ENCODE measurements at regions of chr15 and their contacts with region 1.

Region 1: GRCh38 chr15:70111203-70112073 is 13.7 kb upstream of the TLE3 start:
- DNase-seq: peak; percentile 76
- H3K4me3 ChIP-seq: peak overlapping the region in 1 of 4 donors; percentile 21
- H3K27ac ChIP-seq: peak overlapping the region; percentile 78 to 82 (median 80)
- H3K4me1 ChIP-seq: peaks cover 5 to 14% (median 7%) of the 10 kb centered on the region in 4 donors
- H3K27me3 ChIP-seq: no peaks in the 10 kb centered on the region
- CTCF ChIP-seq: no peak
- EP300 ChIP-seq: no peak
- POLR2A ChIP-seq: no peak

Region 2: DNA sequence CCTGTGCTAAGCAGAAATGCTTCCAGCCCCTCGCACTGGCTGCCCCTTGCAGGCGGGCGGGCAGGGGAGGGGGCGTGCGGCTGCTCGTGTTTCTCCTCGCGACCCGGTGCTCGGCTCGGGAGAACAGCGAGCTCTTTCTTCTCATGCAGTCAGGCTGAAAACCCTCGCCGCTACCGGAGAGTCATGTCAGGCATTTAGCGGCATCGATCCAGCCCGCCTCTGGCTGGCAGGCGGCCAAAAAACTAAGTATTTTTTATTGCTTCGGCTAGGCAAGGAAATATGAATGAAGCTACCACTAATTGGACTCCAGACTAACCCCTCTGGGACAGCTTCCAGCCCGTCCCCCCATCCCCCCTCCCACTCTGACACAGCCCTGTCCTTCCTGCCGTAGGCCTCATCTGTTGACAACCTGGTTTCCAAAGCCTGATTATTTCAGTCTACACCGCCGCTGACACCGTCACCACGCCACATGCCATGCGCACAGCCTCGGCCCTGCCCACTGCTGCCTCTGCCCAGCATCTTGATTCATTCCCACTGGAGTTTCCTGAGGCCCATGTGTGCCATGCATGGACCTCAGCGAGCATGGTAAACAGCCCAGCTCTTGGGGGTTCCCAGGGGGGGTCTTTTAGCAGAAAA is 49.0 kb before region 1 on chr15:
- in situ Hi-C with region 1: no loop called
- intact Hi-C with region 1: no loop called
- DNase-seq: peak; percentile 84
- H3K4me3 ChIP-seq: peak overlapping the region in 1 of 4 donors; percentile 8
- H3K27ac ChIP-seq: peak overlapping the region in 3 of 4 donors; percentile 66 to 76 (median 73)
- H3K4me1 ChIP-seq: peaks cover 16 to 41% (median 37%) of the 10 kb centered on the region in 4 donors
- H3K27me3 ChIP-seq: no peaks in the 10 kb centered on the region
- CTCF ChIP-seq: no peak
- EP300 ChIP-seq: no peak
- POLR2A ChIP-seq: no peak

Region 3: GRCh38 chr15:70152070-70152480 is 40.6 kb after region 1 on chr15:
- in situ Hi-C with region 1: no loop called
- intact Hi-C with region 1: loop called (anchors 5 kb)
- DNase-seq: no peak
- H3K4me3 ChIP-seq: no peak overlapping the region
- H3K27ac ChIP-seq: peak overlapping the region in 3 of 4 donors; percentile 36 to 54 (median 49)
- H3K4me1 ChIP-seq: peaks cover 18 to 24% (median 21%) of the 10 kb centered on the region in 4 donors
- H3K27me3 ChIP-seq: no peaks in the 10 kb centered on the region
- CTCF ChIP-seq: no peak
- EP300 ChIP-seq: no peak
- POLR2A ChIP-seq: no peak

Region 4: DNA sequence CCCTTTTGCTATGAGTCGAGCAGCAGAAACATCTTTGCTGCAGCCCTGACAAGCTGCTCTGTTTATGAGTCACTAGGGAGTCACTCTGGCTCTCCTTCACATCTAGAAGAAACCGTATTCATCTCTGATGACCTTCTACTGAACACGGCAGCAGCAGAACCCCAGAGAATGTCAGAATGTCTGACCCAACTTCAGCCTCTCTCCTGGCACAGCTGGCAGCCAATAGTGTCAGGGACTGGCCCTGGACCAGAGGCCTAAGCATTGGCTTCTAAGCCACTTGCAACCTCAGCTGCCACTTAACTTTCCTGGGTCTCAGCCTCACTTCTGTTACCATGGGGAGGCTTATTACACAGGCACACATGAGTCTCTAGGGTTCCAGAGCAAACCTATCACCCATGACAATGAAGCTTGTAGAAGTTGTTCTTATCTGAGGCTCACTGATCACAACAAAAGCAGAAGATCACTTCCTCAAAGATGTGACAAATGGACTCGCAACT is 170.4 kb after region 1 on chr15:
- in situ Hi-C with region 1: no loop called
- intact Hi-C with region 1: no loop called
- DNase-seq: no peak
- H3K4me3 ChIP-seq: no peak overlapping the region
- H3K27ac ChIP-seq: no peak overlapping the region
- H3K4me1 ChIP-seq: no peaks in the 10 kb centered on the region
- H3K27me3 ChIP-seq: no peaks in the 10 kb centered on the region
- CTCF ChIP-seq: no peak
- EP300 ChIP-seq: no peak
- POLR2A ChIP-seq: no peak